Left ventricle myocardium inferior (tissue), 1 donor: ENCODE measurements at regions of chr1 and their contacts with region 1.

Region 1: DNA sequence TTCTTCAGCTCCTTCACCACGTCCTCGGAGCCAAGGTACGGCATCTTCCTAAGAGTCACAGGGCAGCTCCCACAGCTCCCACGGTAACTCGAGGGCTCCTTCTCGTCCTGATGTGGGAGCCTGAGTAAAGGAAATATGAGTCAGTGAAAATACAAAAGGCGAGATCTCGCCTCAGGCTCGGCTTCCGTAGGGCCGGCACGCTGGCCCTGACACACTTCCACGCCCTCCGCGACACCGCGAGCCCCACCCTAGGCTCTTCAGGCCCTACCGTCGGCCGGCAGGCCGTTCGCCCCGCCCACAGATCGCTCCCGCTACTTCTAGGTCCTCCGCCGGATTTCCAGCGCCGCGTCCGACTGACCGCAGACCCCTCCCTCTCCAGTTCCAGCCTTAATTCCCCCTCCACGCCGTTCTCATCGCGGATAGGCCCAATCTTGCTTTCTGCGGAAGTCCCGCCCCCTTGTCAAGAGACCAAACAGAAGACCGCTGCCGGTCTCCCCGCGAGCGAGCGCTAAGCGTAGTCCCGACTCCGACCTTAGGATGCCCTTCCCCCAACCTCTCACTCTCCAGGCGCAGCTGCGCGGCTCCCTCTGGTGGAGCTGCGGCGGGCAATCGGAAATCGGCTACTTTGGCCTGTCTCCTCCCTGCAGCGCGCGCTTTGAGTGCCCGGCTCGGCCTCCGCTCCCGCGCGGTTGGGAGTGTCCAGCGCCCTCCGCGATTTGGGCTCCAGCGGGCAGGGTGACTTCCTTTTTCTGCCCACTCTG is at the starts of genes AP4B1 and DCLRE1B:
- DNase-seq: peak; percentile 99
- H3K4me3 ChIP-seq: peak within 1 kb of the TSS; percentile 71
- H3K27ac ChIP-seq: peak within 1 kb of the TSS; percentile 93
- H3K4me1 ChIP-seq: peaks cover 38% of the 10 kb centered on the region
- H3K27me3 ChIP-seq: no peaks in the 10 kb centered on the region
- CTCF ChIP-seq: peak; percentile 78
- total RNA-seq, gene AP4B1: 11.8 TPM
- total RNA-seq, gene DCLRE1B: 2.1 TPM

Region 2: GRCh38 chr1:113929750-113930498 is 25.1 kb after region 1 on chr1:
- intact Hi-C with region 1: loop called (anchors 2 kb)
- DNase-seq: peak; percentile 31
- H3K4me3 ChIP-seq: peak overlapping the region; percentile 96
- H3K27ac ChIP-seq: peak overlapping the region; percentile 97
- H3K4me1 ChIP-seq: peaks cover 72% of the 10 kb centered on the region
- H3K27me3 ChIP-seq: no peaks in the 10 kb centered on the region
- CTCF ChIP-seq: no peak